ENCODE measurements at regions of chr1 and their contacts with region 1.

Region 1: DNA sequence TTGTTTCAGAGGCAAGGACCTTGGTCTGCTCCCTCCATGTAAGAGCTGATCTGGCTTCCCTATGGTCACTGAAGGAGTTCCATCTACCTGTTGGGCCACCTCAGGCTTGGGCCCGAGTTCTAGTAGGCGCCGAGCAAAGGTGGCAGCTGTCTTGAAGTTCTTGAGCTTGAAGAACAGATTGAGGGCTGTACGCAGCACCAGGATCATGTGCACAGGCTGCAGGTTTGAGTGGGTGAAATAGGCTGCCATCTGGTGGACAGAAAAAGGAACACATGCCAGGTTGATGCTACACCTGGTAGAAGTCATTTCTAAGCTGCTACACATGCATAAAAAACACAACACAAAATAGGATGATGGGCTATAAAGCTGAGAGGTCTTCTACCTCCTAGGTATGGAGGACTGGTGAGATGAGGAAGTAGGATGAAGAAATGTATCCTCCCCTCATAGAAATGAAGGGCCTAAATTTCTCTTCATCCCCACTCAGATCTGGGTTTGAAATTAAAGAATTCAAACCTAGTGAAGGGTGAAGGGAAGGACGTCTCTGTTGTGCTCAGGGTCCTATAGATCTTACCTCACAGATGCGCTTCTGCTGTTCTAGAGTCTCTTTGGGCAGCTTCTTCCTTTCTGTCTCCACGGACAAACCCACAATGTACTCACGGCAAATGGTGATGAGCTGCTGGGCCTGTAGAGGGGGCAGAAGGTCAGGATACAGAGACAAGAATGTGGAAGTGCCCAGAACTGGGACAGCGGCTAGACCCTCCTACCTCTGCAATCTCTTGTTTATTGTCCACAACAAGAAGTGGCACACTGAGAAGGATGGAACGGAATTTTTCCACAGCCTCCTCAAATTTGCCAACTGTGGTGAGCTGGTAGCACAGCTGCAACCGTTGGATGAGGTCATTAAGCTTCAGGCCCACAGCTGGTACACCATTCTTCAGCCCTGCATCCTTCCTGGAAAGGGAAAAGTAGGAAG is 6.6 kb upstream of the PEX19 start:
- DNase-seq: peak; percentile 66
- H3K4me3 ChIP-seq: no peak overlapping the region
- H3K27ac ChIP-seq: no peak overlapping the region
- H3K4me1 ChIP-seq: no peaks in the 10 kb centered on the region
- H3K27me3 ChIP-seq: no peaks in the 10 kb centered on the region
- CTCF ChIP-seq: peak; percentile 79

Region 2: GRCh38 chr1:160101037-160101716 is 190.4 kb before region 1 on chr1:
- intact Hi-C with region 1: loop called (anchors 5 kb)
- DNase-seq: peak; percentile 67
- H3K4me3 ChIP-seq: no peak overlapping the region
- H3K27ac ChIP-seq: no peak overlapping the region
- H3K4me1 ChIP-seq: peaks cover 13% of the 10 kb centered on the region
- H3K27me3 ChIP-seq: no peaks in the 10 kb centered on the region
- CTCF ChIP-seq: peak; percentile 82

Region 3: GRCh38 chr1:160328184-160328583 is 36.6 kb after region 1 on chr1:
- intact Hi-C with region 1: loop called (anchors 5 kb)
- DNase-seq: no peak
- H3K4me3 ChIP-seq: no peak overlapping the region
- H3K27ac ChIP-seq: no peak overlapping the region
- H3K4me1 ChIP-seq: no peaks in the 10 kb centered on the region
- H3K27me3 ChIP-seq: no peaks in the 10 kb centered on the region
- CTCF ChIP-seq: no peak

Measured in colonic mucosa (tissue), 4 donors.